ENCODE measurements at regions of chr2 and their contacts with region 1.

Region 1: DNA sequence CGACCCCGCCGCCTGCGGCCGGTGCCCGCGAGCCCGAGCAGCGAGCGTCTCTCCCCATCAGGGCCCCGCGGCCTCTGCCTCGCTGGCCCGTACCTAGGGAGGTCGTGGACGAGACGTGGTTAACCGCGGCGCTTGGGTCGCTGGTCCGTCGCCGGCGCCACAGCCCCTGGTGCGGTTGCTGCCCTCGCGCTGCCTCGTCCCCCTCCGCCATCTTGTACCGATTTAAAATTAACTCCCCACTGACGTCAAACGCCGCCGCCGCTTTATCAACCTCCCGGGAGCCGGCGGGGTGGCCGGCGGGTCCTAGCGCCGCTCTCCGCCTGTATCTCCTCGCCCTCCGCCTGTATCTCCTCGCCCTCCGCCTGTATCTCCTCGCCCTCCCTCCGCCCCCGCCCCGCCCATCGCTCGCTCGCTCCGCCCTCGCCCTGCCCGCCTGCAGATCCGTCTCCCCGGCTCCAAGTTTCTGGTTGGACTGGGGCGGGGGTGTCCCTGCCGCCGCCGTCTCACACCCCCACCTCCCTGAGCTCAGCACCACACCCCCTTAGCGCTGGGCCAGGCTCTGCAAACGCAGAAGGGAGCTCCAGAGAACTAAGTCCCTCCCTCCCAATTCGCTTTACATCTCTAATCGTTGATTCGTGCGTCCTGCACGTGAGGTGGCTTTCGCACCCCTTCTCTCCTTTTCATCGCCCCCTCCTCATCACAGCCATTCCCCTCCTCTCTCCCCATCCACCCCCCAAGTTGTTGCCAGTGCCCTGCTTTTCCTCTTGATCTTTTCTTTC is at the start of gene ATL2:
- DNase-seq: peak; percentile 96
- H3K4me3 Mint-ChIP-seq: peak within 1 kb of the TSS; percentile 88
- H3K27ac Mint-ChIP-seq: peak within 1 kb of the TSS; percentile 83
- H3K4me1 Mint-ChIP-seq: peaks cover 51% of the 10 kb centered on the region
- H3K27me3 Mint-ChIP-seq: peaks cover 1% of the 10 kb centered on the region
- total RNA-seq, gene ATL2: 47.9 to 51.9 TPM

Region 2: DNA sequence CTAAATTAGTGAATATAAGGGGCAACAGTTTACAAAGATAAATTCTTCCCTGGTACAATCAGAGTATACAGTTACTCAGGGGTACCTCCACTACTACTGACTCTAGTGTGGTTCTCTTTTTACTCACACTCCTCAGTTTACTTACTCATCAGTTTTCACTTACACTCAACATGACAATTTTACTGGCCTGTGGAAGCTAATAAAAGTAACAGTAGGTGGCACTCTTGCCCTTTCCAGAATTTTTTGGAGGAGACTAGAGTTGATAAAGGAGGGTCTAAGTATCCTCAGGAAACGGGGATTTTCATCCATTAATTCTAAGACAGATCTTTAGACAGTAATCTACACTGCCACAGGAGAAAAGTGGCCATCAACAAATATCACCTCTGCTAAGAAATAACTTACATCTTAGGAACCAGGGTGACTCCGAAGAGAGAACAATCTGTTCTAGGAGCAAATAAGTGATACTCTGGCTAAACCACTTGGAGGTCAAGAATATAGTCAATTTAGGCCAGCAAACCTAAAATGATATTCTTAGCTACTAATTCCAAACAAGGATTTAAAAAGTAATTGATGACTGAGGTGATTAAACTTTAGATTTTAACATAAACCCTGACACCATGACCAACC is 61.4 kb before region 1 on chr2:
- CTCF ChIA-PET with region 1: interaction called, 29 read pairs
- POLR2A ChIA-PET with region 1: interaction called, 4 read pairs
- DNase-seq: no peak
- H3K4me3 Mint-ChIP-seq: no peak overlapping the region
- H3K27ac Mint-ChIP-seq: no peak overlapping the region
- H3K4me1 Mint-ChIP-seq: peaks cover 6% of the 10 kb centered on the region
- H3K27me3 Mint-ChIP-seq: no peaks in the 10 kb centered on the region

Region 3: GRCh38 chr2:38327580-38327979 is 49.7 kb before region 1 on chr2:
- CTCF ChIA-PET with region 1: interaction called, 12 read pairs
- POLR2A ChIA-PET with region 1: interaction called, 6 read pairs
- DNase-seq: no peak
- H3K4me3 Mint-ChIP-seq: no peak overlapping the region
- H3K27ac Mint-ChIP-seq: no peak overlapping the region
- H3K4me1 Mint-ChIP-seq: peaks cover 11% of the 10 kb centered on the region
- H3K27me3 Mint-ChIP-seq: no peaks in the 10 kb centered on the region

Region 4: DNA sequence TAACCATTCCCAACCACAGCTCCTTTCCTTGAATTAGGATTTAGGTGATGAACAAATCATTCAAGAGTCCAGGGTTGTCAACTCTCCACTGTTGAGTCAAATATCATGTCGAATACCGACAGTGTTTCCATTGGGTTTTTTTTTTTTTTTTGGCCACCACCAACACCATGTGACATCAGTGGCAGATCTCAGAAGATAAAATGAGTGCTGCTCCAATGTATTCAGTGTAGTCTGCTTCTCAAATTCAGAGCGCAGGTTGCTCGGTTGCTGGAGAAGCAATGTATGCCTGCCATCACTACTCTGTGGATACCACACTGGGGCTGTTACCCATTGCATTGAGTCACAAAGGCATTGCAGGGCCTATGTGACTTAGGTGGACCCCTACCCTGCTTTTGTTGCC is 10.6 kb after region 1 on chr2:
- CTCF ChIA-PET with region 1: interaction called, 4 read pairs
- POLR2A ChIA-PET with region 1: interaction called, 22 read pairs
- DNase-seq: peak; percentile 32
- H3K4me3 Mint-ChIP-seq: peak overlapping the region; percentile 16
- H3K27ac Mint-ChIP-seq: peak overlapping the region; percentile 64
- H3K4me1 Mint-ChIP-seq: peaks cover 25% of the 10 kb centered on the region
- H3K27me3 Mint-ChIP-seq: peaks cover 11% of the 10 kb centered on the region

Region 5: GRCh38 chr2:38454081-38454480 is 76.8 kb after region 1 on chr2:
- CTCF ChIA-PET with region 1: no interaction called
- POLR2A ChIA-PET with region 1: no interaction called
- DNase-seq: no peak
- H3K4me3 Mint-ChIP-seq: no peak overlapping the region
- H3K27ac Mint-ChIP-seq: no peak overlapping the region
- H3K4me1 Mint-ChIP-seq: no peaks in the 10 kb centered on the region
- H3K27me3 Mint-ChIP-seq: peaks cover 16% of the 10 kb centered on the region

Region 6: DNA sequence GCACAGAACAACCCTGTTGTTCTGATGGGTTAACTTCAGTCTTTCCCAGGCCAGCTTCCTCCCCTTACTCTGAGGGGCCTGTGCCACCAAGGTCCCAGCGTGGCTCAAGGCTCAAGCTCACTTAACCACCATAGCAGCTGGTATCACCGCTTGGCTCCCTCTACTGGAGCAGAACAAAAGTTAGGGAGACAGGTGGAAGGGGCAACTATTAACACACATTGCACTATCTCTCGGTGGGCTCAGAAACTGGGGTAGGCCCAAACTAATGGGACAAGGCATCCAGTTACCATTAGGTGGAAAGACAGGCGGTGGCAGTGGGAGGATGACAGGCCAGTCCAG is 88.5 kb after region 1 on chr2:
- CTCF ChIA-PET with region 1: interaction called, 11 read pairs
- POLR2A ChIA-PET with region 1: no interaction called
- DNase-seq: no peak
- H3K4me3 Mint-ChIP-seq: no peak overlapping the region
- H3K27ac Mint-ChIP-seq: no peak overlapping the region
- H3K4me1 Mint-ChIP-seq: peaks cover 7% of the 10 kb centered on the region
- H3K27me3 Mint-ChIP-seq: peaks cover 3% of the 10 kb centered on the region

Region 7: GRCh38 chr2:38474715-38475566 is 97.7 kb after region 1 on chr2:
- CTCF ChIA-PET with region 1: no interaction called
- POLR2A ChIA-PET with region 1: interaction called, 14 read pairs
- DNase-seq: peak; percentile 40
- H3K4me3 Mint-ChIP-seq: no peak overlapping the region
- H3K27ac Mint-ChIP-seq: no peak overlapping the region
- H3K4me1 Mint-ChIP-seq: peaks cover 31% of the 10 kb centered on the region
- H3K27me3 Mint-ChIP-seq: peaks cover 6% of the 10 kb centered on the region

Region 8: DNA sequence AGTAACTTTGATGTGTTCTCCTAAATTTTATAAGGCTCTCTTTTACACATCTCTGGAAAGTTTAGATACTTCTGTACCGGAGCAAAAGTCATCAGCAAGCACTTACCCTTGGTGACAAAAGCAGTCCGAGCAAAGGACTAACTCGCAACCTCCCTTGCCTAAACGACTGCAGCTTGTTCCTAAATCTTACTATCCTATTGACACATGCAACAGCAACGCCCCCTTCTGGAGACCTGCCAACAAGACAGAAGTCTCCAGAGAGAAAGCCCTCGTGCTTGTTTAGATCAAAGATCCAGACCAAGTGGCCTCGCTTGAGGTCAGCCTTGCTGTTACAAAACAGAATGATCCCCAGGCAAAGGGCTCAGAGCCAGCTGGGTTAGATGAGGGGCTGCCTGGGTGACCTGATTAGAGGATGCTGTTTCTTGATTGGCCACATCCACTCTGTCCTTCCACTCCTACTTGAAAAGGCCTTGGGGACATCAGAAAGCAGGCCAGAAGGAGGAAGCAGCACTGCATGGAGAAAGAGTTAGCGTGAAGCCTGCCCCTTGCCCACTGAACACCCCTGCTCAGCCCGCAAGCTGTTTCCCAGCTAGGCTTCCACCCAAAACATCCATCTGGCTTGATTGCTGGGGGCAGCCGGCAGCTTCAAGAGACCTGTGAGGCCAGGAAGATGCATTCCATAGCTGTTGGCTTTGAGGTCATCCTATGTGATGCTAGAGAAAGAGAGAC is 131.2 kb after region 1 on chr2:
- CTCF ChIA-PET with region 1: interaction called, 17 read pairs
- POLR2A ChIA-PET with region 1: no interaction called
- DNase-seq: peak; percentile 84
- H3K4me3 Mint-ChIP-seq: no peak overlapping the region
- H3K27ac Mint-ChIP-seq: no peak overlapping the region
- H3K4me1 Mint-ChIP-seq: peaks cover 16% of the 10 kb centered on the region
- H3K27me3 Mint-ChIP-seq: peaks cover 4% of the 10 kb centered on the region